Activated CD8-positive, alpha-beta T cell treated with anti-CD3 and anti-CD28 coated beads for 36 hours (primary cell): ENCODE measurements at regions of chr13 and their contacts with region 1.

Region 1: GRCh38 chr13:75876360-75877050 is 240.4 kb downstream of the LMO7 start:
- DNase-seq: peak; percentile 73
- ATAC-seq: peak; percentile 94
- H3K4me3 Mint-ChIP-seq: no peak overlapping the region
- H3K27ac Mint-ChIP-seq: no peak overlapping the region
- H3K4me1 Mint-ChIP-seq: peaks cover 3% of the 10 kb centered on the region
- H3K27me3 Mint-ChIP-seq: peaks cover 3% of the 10 kb centered on the region
- CTCF ChIP-seq: peak; percentile 90

Region 2: GRCh38 chr13:75425216-75426009 is 451.1 kb before region 1 on chr13:
- CTCF ChIA-PET with region 1: no interaction called
- POLR2A ChIA-PET with region 1: no interaction called
- intact Hi-C with region 1: no loop called
- DNase-seq: no peak
- ATAC-seq: peak; percentile 45
- H3K4me3 Mint-ChIP-seq: no peak overlapping the region
- H3K27ac Mint-ChIP-seq: no peak overlapping the region
- H3K4me1 Mint-ChIP-seq: peaks cover 8% of the 10 kb centered on the region
- H3K27me3 Mint-ChIP-seq: peaks cover 29% of the 10 kb centered on the region
- CTCF ChIP-seq: no peak

Region 3: GRCh38 chr13:75896271-75896670 is 19.8 kb after region 1 on chr13:
- CTCF ChIA-PET with region 1: interaction called, 13 read pairs
- POLR2A ChIA-PET with region 1: no interaction called
- intact Hi-C with region 1: no loop called
- DNase-seq: no peak
- ATAC-seq: no peak
- H3K4me3 Mint-ChIP-seq: no peak overlapping the region
- H3K27ac Mint-ChIP-seq: no peak overlapping the region
- H3K4me1 Mint-ChIP-seq: no peaks in the 10 kb centered on the region
- H3K27me3 Mint-ChIP-seq: peaks cover 8% of the 10 kb centered on the region
- CTCF ChIP-seq: no peak

Region 4: GRCh38 chr13:76016799-76017400 is 140.4 kb after region 1 on chr13:
- CTCF ChIA-PET with region 1: interaction called, 18 read pairs
- POLR2A ChIA-PET with region 1: no interaction called
- intact Hi-C with region 1: loop called (anchors 5 kb)
- DNase-seq: peak; percentile 49
- ATAC-seq: peak; percentile 73
- H3K4me3 Mint-ChIP-seq: no peak overlapping the region
- H3K27ac Mint-ChIP-seq: no peak overlapping the region
- H3K4me1 Mint-ChIP-seq: no peaks in the 10 kb centered on the region
- H3K27me3 Mint-ChIP-seq: no peaks in the 10 kb centered on the region
- CTCF ChIP-seq: peak; percentile 55

Region 5: DNA sequence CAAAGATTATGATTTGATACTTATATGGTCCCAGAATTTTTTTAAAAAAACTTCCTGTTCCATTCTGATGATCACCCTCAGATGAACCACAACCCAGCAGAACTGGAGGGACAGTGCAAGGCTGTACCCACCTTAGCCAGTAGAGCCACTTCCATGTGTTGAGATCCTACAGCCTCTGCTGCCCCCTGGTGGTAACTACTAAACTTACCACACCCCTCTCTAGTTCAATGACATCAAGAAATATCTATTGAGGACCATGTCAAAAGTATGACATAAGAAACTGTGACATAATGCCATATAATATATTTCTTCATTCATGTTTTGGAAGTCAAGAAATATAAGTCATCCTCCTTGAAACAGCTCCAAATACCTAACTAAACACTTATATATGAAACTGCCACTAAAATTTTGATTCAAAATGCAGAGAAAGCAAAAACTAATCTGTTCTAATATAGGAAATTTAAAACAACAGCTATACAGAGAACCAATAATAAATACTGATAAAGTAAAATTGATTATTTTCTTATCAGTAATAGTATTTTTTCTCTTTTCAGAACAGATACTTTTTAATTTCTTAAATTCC is 597.1 kb after region 1 on chr13:
- CTCF ChIA-PET with region 1: interaction called, 58 read pairs
- POLR2A ChIA-PET with region 1: no interaction called
- intact Hi-C with region 1: loop called (anchors 2 kb)
- DNase-seq: peak; percentile 84
- ATAC-seq: peak; percentile 97
- H3K4me3 Mint-ChIP-seq: no peak overlapping the region
- H3K27ac Mint-ChIP-seq: no peak overlapping the region
- H3K4me1 Mint-ChIP-seq: no peaks in the 10 kb centered on the region
- H3K27me3 Mint-ChIP-seq: peaks cover 7% of the 10 kb centered on the region
- CTCF ChIP-seq: peak; percentile 82